Aorta (tissue), 5 donors: ENCODE measurements at regions of chr17 and their contacts with region 1.

Region 1: DNA sequence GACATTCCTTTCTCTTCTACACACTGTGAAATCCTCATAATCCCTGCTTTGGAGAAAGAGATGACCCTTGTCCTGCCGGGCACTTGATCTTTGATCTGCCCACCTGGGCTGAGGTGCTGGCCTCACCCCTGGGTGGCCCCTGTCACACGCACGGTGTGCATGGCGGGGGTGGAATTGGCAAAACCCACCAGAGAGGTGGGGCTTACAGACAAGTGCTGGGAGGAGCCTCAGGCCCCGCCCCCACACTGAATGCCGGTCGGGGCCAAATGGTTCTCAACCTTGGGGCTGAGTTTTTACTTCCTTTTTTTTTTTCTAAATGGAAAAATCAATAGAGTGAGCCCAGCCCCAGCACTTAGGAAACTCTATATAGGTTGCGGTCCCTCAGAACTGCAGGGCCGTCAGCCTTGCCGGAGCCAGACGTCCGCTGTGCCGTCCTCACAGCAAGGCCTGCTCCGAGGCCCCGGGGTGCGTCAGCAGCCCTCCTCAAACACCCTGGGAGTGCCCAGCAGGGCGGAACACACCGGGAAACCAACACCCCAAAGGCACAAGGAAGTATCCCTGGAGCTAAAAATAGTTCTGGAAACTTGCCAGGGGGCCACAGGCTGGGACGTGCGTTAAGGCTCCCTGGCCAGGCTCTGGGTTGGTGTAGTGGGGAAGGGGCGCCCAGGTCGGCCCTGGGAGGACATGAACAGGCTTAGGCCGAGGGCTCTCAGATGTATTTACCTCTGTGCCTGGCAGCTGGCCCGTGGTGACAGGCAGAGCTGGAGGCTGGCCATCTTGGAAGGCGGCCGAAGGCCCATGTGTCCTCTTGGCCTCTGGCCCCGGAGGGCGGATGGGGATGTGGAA is 11.0 kb downstream of the GPRC5C start:
- DNase-seq: peak; percentile 90 to 93
- ATAC-seq: peak; percentile 64
- H3K4me3 ChIP-seq: no peak overlapping the region
- H3K27ac ChIP-seq: peak overlapping the region; percentile 35 to 60
- H3K4me1 ChIP-seq: peaks cover 0 to 1% of the 10 kb centered on the region in 2 donors
- H3K27me3 ChIP-seq: no peaks in the 10 kb centered on the region

Region 2: DNA sequence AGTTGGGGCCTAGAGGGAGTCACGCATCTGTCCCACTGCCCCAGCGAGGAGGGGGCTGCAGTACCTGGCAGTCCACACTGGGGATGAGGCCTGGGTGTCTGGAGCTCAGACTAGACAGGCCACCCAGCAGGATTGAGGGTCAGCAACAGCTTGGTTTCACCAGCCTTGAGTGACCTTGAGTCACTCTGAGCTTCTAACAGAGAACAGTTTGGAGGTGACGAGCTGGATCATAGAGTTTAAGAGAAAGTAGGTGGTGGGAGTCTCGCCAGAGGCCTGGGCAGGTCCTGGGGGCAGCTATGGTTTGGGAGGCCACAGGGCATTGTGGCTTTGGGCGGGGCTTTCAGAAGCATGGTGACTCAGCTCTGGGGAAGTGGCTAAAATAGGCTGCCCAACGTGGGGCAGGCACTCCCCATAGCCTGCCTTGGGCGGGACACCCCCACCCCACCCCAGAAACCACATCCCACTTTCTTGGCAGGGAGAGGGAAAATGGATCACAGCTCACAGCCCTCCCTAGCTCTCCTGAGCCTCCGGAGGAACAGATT is 1151.6 kb before region 1 on chr17:
- intact Hi-C with region 1: loop called in 1 of 2 experiments (anchors 10 kb)
- DNase-seq: peak; percentile 91
- ATAC-seq: peak; percentile 69
- H3K4me3 ChIP-seq: no peak overlapping the region
- H3K27ac ChIP-seq: peak overlapping the region; percentile 90 to 92
- H3K4me1 ChIP-seq: peaks cover 0 to 5% of the 10 kb centered on the region in 2 donors
- H3K27me3 ChIP-seq: no peaks in the 10 kb centered on the region